CD4-positive, alpha-beta memory T cell (primary cell): ENCODE measurements at regions of chr15 and their contacts with region 1.

Region 1: DNA sequence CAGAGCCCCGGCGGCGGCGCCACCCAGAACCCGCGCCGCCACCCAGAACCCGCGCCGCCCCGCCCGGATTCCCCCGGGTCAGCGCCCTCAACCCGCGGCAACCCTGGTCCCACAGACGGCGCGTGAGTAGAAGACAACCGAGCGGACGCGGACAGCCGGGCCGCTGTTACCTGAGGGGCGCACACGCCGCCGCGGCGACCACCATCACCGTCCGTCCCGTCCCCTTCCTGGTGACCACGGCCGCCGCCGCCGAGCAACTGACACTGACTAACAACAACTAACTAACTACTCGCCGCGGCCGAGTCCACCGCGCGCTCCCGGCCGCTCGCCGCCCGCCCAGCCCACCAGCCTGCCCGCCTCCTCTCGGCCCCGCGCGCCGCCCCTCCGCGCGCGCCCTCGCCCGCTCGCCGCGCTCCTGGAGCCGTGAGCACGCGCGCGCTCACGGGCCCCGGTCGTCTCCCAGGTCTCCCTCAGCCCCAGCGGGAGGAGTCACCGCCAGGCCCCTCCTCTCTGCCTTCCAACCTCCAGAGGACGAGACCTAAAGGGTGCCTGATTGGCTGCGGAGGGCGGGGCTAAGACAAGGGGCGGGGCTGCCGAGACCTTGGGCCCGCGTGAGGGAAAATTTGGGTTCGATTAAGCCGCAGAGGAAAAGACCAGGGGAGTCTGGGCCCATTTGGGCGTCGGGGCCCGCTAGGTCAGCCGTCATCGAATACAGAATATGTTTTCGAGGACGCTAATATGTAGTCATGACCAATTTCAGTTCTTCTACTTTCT is at the start of gene PEAK1:
- DNase-seq: peak; percentile 98 to 100 (median 99)
- H3K4me3 ChIP-seq: peak within 1 kb of the TSS; percentile 88 to 98
- H3K4me3 Mint-ChIP-seq: peak within 1 kb of the TSS; percentile 95 to 100 (median 98)
- H3K27ac ChIP-seq: peak within 1 kb of the TSS; percentile 84
- H3K27ac Mint-ChIP-seq: peak within 1 kb of the TSS; percentile 95 to 99 (median 98)
- H3K4me1 ChIP-seq: peaks cover 14% of the 10 kb centered on the region
- H3K4me1 Mint-ChIP-seq: peaks cover 27 to 49% (median 36%) of the 10 kb centered on the region in 4 donors
- H3K27me3 ChIP-seq: no peaks in the 10 kb centered on the region
- H3K27me3 Mint-ChIP-seq: peaks cover 0 to 3% of the 10 kb centered on the region in 2 donors
- total RNA-seq, gene PEAK1: 7.8 to 10.1 TPM

Region 2: DNA sequence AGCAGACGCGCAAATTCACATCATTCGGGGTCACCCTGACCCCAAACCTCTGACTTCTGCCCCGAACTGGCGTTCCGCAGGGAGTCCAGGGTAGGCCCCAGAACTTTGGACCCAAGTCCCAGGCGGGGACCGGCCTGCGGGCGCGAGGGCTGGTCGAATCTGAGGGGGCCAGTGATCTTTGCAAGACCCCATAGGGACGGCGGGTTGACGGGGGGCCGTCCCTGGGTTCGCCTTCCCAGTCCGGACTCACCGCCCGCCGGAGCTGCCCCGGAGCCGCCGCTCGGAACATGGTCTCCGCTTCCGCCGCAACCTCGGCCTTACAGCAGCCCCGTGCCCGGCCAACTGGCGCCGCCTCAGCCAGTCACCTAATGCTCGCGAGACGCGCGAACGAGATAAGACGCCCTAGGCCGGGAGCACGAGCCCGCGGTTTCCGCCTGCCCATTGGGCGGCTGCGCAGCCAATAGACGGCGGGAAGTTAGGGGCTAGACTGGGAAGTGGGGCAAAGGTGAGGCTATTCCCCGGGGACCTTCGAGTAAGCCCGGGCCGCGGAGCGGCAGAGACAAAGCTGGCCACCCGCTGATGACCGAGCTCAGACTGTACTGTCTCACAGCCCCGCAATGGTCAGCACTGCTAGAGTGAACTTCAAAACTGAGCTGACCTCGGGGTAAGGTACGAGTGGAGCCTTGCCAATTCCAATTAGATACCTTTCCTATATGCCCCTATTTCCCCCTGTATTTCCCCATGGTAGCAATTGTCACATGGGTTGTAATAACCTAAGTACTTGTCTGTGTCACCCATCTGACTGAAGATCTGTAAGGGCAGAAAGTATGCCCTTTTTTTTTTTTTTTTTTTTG is 1108.7 kb before region 1 on chr15 and contains the start of gene ETFA:
- CTCF ChIA-PET with region 1: no interaction called
- POLR2A ChIA-PET with region 1: no interaction called
- intact Hi-C with region 1: loop called (anchors 10 kb)
- DNase-seq: peak; percentile 81 to 86 (median 84)
- H3K4me3 ChIP-seq: peak within 1 kb of the TSS; percentile 51 to 74
- H3K4me3 Mint-ChIP-seq: peak within 1 kb of the TSS; percentile 88 to 96 (median 92)
- H3K27ac ChIP-seq: peak within 1 kb of the TSS; percentile 72
- H3K27ac Mint-ChIP-seq: peak within 1 kb of the TSS; percentile 59 to 94 (median 91)
- H3K4me1 ChIP-seq: peaks cover 21% of the 10 kb centered on the region
- H3K4me1 Mint-ChIP-seq: peaks cover 22 to 44% (median 33%) of the 10 kb centered on the region in 4 donors
- H3K27me3 ChIP-seq: no peaks in the 10 kb centered on the region
- H3K27me3 Mint-ChIP-seq: peaks cover 0 to 1% of the 10 kb centered on the region in 2 donors
- total RNA-seq, gene ETFA: 47.7 to 49.4 TPM

Region 3: DNA sequence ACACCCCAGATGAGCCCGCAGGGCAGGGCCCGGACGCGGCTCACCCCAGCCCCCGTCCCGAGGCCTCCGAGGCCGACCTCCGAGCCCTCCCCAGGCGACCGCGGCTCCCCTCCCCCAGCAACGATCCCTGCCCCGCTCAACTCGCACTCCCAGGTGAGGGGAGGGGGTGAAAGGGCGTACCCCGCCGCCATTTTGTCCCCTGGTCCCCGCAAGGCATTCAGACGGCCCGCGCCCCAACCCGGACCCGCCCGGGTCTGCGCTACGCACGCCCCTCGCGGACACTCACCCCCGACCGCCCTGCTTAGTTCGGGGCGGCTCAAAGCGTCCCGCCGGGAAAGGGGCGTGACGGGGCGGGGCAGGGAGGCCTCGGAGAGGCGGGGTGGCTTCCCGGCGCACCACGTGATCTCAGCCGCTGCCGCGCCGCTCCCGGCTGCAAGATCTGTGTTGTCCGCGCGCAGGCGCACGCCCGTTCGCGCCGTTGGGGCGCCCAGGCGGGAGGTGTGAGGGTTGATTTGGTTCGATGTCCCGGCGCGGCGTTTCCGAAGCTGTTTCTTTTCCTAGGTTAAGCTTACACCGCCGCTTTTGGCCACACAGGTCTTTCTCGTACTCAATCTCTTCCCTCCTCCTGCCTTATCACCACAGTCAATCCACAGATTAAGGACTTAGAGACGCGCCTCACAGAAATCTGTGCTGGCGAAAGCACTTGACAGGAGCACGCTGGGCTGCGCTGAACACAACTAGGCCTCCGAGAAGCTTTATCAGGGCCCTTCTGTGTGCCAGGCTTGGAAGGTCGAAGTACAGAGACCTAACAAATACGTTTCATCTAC is 514.8 kb before region 1 on chr15 and contains the start of gene SCAPER:
- CTCF ChIA-PET with region 1: no interaction called
- POLR2A ChIA-PET with region 1: no interaction called
- intact Hi-C with region 1: loop called (anchors 10 kb)
- DNase-seq: peak; percentile 88 to 90 (median 90)
- H3K4me3 ChIP-seq: peak within 1 kb of the TSS; percentile 83 to 87
- H3K4me3 Mint-ChIP-seq: peak within 1 kb of the TSS; percentile 94 to 97 (median 94)
- H3K27ac ChIP-seq: peak within 1 kb of the TSS; percentile 71
- H3K27ac Mint-ChIP-seq: peak within 1 kb of the TSS; percentile 92 to 98 (median 96)
- H3K4me1 ChIP-seq: peaks cover 36% of the 10 kb centered on the region
- H3K4me1 Mint-ChIP-seq: peaks cover 24 to 41% (median 29%) of the 10 kb centered on the region in 4 donors
- H3K27me3 ChIP-seq: no peaks in the 10 kb centered on the region
- H3K27me3 Mint-ChIP-seq: no peaks in the 10 kb centered on the region
- total RNA-seq, gene SCAPER: 41.3 to 41.4 TPM

Region 4: DNA sequence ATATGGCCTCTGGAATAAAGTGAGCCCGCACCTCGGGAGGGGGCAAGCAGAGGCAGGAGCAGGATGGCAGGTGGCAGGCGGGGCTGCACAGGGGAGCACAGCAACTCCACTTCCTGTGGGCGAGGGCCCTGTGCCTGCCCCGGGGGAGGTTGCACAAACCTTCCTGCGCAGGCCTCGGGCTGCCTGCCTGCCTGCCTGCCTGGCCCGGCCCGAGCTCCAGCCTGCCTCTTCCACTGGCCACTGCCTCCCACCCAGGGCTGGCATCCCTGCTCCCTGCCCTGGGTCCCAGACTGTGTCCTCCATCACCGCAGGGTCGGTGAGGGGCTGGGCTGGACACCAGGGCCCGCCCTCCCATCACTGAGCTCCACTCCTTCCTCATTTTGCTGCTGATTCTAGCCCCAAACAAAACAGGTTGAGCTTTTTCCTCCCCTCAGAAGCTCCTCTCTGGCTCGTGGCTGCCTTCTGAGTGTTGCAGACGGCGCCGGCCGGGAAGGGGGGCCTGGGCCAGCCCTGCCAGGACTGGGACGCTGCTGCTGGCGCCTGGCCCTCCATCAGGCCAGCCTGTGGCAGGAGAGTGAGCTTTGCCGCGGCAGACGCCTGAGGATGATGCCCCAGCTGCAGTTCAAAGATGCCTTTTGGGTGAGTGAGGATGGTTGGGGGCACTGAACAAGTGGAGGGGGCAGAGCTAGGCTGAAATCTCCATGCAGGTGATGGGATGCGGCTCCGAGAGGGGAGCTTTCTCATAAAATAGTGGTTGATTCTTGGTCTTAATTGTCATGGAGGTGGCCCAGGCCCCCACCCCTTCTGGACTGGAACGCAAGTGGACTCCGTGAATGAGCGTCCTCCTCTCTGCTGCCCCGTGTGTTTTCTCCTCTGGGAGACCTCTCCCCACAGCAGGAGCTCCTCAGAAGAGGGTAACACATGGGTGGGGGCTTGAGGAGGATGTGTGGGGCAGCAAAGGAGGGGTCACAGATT is 424.8 kb before region 1 on chr15 and contains the start of gene PSTPIP1:
- CTCF ChIA-PET with region 1: no interaction called
- POLR2A ChIA-PET with region 1: interaction called, 10 read pairs
- intact Hi-C with region 1: no loop called
- DNase-seq: peak; percentile 65 to 76 (median 74)
- H3K4me3 ChIP-seq: peak within 1 kb of the TSS; percentile 94 to 96
- H3K4me3 Mint-ChIP-seq: peak within 1 kb of the TSS; percentile 94 to 97 (median 96)
- H3K27ac ChIP-seq: peak within 1 kb of the TSS; percentile 79
- H3K27ac Mint-ChIP-seq: peak within 1 kb of the TSS; percentile 92 to 97 (median 96)
- H3K4me1 ChIP-seq: peaks cover 56% of the 10 kb centered on the region
- H3K4me1 Mint-ChIP-seq: peaks cover 38 to 92% (median 52%) of the 10 kb centered on the region in 4 donors
- H3K27me3 ChIP-seq: no peaks in the 10 kb centered on the region
- H3K27me3 Mint-ChIP-seq: no peaks in the 10 kb centered on the region
- total RNA-seq, gene PSTPIP1: 225 to 233 TPM

Region 5: GRCh38 chr15:77013776-77014131 is 406.3 kb before region 1 on chr15:
- CTCF ChIA-PET with region 1: no interaction called
- POLR2A ChIA-PET with region 1: no interaction called
- intact Hi-C with region 1: loop called (anchors 10 kb)
- DNase-seq: peak; percentile 77 to 97 (median 80)
- H3K4me3 ChIP-seq: peak overlapping the region; percentile 33 to 47
- H3K4me3 Mint-ChIP-seq: peak overlapping the region; percentile 74 to 94 (median 83)
- H3K27ac ChIP-seq: peak overlapping the region; percentile 67
- H3K27ac Mint-ChIP-seq: peak overlapping the region; percentile 82 to 100 (median 95)
- H3K4me1 ChIP-seq: peaks cover 99% of the 10 kb centered on the region
- H3K4me1 Mint-ChIP-seq: peaks cover 52 to 98% (median 74%) of the 10 kb centered on the region in 4 donors
- H3K27me3 ChIP-seq: no peaks in the 10 kb centered on the region
- H3K27me3 Mint-ChIP-seq: peaks cover 0 to 2% of the 10 kb centered on the region in 2 donors

Region 6: DNA sequence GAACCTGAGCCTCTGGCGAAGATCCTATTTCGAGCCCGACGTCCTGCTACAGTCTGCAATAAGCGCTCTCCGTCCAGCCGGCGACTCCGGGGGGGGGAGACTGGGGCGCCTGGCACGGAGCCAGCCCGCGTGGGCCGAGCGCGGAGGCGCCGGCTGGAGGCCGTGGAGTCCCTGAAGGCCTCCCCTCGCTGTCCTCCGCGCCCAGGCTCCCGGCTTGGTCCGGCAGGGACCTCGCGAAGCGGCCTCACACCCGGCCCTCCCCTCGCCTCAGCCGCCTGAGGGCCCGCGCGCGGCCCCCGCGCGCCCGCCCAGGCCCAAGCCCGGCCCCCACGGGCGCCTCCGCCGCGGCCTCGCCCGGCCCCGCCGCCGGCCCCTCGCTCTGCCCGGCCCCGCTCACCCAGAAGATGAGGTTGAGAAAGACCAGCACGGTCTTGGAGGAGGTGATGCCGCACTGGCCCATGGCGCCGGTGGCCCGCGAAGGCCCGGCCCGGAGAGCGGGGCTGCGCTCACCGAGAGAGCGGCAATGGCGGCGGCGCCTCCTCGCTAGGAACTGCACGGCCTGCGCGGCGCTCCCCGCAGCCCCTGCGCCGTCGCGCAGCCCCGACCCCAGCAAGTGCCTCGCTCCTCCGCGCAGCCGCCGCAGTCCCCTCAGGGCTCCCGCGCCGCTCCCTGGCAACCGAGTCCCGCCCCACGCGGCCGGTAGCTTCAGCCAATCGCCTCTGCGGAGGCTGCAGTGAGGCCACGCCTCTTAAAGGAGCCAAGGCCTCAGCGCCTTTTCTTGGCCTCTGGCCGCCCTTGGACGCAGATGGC is 349.3 kb before region 1 on chr15 and contains the start of gene TSPAN3:
- CTCF ChIA-PET with region 1: no interaction called
- POLR2A ChIA-PET with region 1: no interaction called
- intact Hi-C with region 1: loop called (anchors 1 kb)
- DNase-seq: peak; percentile 89 to 90 (median 90)
- H3K4me3 ChIP-seq: peak within 1 kb of the TSS; percentile 14 to 63
- H3K4me3 Mint-ChIP-seq: peak within 1 kb of the TSS; percentile 82 to 92 (median 88)
- H3K27ac ChIP-seq: peak within 1 kb of the TSS; percentile 40
- H3K27ac Mint-ChIP-seq: peak within 1 kb of the TSS; percentile 74 to 90 (median 85)
- H3K4me1 ChIP-seq: peaks cover 14% of the 10 kb centered on the region
- H3K4me1 Mint-ChIP-seq: peaks cover 13 to 23% (median 18%) of the 10 kb centered on the region in 4 donors
- H3K27me3 ChIP-seq: no peaks in the 10 kb centered on the region
- H3K27me3 Mint-ChIP-seq: no peaks in the 10 kb centered on the region
- total RNA-seq, gene TSPAN3: 13.3 to 14.3 TPM

Region 7: GRCh38 chr15:77430213-77430612 is 10.2 kb after region 1 on chr15:
- CTCF ChIA-PET with region 1: no interaction called
- POLR2A ChIA-PET with region 1: interaction called, 11 read pairs
- intact Hi-C with region 1: no loop called
- DNase-seq: no peak
- H3K4me3 ChIP-seq: no peak overlapping the region
- H3K4me3 Mint-ChIP-seq: no peak overlapping the region
- H3K27ac ChIP-seq: no peak overlapping the region
- H3K27ac Mint-ChIP-seq: no peak overlapping the region
- H3K4me1 ChIP-seq: peaks cover 31% of the 10 kb centered on the region
- H3K4me1 Mint-ChIP-seq: peaks cover 26 to 40% (median 34%) of the 10 kb centered on the region in 4 donors
- H3K27me3 ChIP-seq: no peaks in the 10 kb centered on the region
- H3K27me3 Mint-ChIP-seq: no peaks in the 10 kb centered on the region